Activated CD4-positive, alpha-beta memory T cell treated with anti-CD3 and anti-CD28 coated beads, Interleukin-2, amount 10 ng/mL, durations not matched to agents 7 days and 5 days (primary cell): ENCODE measurements at regions of chr9 and their contacts with region 1.

Region 1: DNA sequence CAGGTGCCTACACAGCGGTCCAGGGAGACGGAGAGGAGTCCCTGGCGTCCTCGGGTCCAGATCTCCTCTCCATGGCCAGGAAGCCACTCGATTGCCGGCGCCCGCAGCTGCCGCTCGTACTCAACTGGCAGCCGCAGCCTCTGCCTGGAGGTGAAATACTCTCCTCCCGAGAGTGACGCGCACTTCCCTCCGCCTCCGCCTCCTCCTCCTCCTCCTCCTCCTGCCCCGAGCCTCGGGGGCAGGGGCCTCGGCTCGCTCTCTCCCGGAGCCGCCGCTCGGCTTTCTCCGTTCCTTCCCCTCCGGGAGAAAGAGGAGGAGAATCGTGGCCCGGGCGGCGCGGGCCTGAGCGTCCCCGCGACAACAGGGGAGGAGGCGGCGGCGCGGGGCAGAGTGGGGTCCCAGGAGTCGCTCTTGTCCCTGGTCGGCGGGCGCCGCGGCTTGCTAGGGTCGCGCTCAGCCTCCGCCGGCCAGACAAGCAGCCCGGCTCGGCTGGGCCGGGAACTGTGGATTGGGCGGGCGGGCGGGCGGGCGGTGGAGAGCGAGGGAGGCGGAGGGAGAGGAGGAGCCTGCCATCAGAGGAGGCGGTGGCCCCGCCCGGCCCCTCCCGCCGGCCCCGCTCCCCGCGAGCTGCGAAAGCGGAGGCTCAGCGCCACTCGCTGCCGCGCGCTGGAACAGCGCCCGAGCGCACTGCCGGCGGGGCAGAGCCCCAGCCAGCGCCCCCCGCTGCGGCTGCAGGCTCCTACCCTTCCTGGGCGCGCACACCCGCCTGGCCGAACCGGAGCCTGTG is at the start of gene CEMIP2:
- DNase-seq: peak; percentile 90
- H3K4me3 Mint-ChIP-seq: peak within 1 kb of the TSS; percentile 84
- H3K27ac Mint-ChIP-seq: peak within 1 kb of the TSS; percentile 83
- H3K4me1 Mint-ChIP-seq: peaks cover 33% of the 10 kb centered on the region
- H3K27me3 Mint-ChIP-seq: no peaks in the 10 kb centered on the region
- total RNA-seq, gene CEMIP2: 137 to 140 TPM

Region 2: DNA sequence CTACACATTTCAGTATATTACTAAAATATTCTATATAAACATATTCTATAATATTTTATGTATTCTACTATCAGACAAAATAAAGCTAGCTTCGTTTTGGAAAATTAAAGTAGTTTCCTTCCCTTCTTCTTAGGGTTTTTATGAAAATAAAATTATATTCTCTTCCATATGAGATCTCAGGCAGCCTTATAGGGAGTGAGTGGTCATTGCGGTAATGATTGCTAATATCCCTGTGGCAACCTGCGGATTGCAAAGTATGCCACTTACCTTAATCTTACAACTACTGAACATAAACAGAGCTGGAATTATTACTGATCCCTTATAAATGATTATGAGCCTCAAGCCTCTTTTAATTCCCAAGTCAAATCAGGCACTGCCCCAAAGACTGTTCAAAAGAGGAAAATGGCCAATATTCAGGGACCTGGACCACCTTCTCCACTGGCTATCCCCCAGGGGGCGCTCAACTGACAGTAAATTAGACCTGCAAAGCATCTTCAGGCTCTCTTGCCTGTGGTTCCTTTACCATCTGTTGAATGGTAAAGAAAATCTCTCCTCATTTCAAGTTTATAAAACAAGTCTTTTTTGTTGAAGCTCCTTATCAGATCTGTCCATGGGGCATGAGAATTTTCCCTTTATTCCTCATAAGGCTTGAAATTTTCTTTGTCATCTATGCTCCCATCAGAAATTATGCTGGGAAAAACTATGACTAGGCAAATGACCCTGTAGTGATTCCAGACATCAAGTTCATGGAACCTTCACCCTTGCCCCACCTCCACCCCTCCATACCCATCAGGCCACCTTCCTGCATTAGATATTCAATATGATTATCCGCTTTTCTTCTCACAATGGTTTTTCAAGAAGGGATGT is 164.2 kb before region 1 on chr9:
- CTCF ChIA-PET with region 1: interaction called, 56 read pairs
- POLR2A ChIA-PET with region 1: interaction called, 4 read pairs
- DNase-seq: peak; percentile 85
- H3K4me3 Mint-ChIP-seq: no peak overlapping the region
- H3K27ac Mint-ChIP-seq: no peak overlapping the region
- H3K4me1 Mint-ChIP-seq: no peaks in the 10 kb centered on the region
- H3K27me3 Mint-ChIP-seq: peaks cover 7% of the 10 kb centered on the region

Region 3: GRCh38 chr9:71683598-71684235 is 84.9 kb before region 1 on chr9:
- CTCF ChIA-PET with region 1: interaction called, 13 read pairs
- POLR2A ChIA-PET with region 1: interaction called, 8 read pairs
- DNase-seq: no peak
- H3K4me3 Mint-ChIP-seq: peak overlapping the region; percentile 53
- H3K27ac Mint-ChIP-seq: peak overlapping the region; percentile 80
- H3K4me1 Mint-ChIP-seq: peaks cover 64% of the 10 kb centered on the region
- H3K27me3 Mint-ChIP-seq: no peaks in the 10 kb centered on the region

Region 4: DNA sequence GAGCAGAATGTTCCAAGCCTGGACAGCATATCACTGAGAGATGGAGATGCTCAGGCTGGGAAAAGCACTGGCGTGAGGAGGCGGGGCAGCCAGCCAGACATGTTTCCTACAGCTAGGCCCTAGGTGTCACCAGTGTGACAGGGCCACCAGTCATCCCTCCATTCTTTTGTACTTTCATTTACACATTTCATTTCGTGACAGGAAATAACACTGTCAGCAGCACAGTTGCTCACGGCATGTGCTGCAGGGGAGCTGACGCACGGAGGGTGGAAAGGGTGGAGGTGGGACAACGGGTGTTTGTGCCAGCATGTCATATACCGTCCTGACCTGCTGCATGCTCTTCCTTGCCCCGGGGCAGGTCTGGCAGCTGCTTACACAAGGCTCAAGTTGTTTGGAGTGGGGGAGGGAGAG is 14.5 kb after region 1 on chr9:
- CTCF ChIA-PET with region 1: interaction called, 65 read pairs
- POLR2A ChIA-PET with region 1: interaction called, 182 read pairs
- DNase-seq: peak; percentile 90
- H3K4me3 Mint-ChIP-seq: peak overlapping the region; percentile 59
- H3K27ac Mint-ChIP-seq: peak overlapping the region; percentile 98
- H3K4me1 Mint-ChIP-seq: peaks cover 46% of the 10 kb centered on the region
- H3K27me3 Mint-ChIP-seq: no peaks in the 10 kb centered on the region

Region 5: DNA sequence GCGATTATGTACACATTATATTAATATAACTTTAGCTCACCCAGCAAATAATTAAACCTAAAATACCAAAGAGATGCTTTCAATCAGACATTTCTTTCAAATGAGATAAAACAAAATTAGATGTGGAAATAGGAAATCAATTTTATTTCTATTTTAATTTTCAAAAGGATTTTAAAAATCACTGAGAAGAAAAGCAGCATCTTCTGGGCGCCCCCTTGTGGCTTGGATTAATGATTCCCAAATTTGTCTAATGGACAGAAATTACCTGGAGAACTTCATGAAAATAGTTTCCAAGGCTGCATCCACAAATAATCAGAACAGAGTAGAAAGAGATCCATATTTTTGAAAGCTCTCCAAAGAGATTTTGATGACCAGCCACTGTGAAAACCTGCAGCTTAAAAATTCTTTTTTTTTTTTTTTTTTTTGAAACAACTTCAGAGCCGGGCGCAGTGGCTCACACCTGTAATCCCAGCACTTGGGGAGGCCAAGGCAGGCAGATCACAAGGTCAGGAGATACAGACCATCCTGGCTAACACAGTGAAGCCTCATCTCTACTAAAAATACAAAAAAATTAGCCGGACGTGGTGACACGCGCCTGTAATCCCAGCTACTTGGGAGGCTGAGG is 50.6 kb after region 1 on chr9:
- CTCF ChIA-PET with region 1: interaction called, 13 read pairs
- POLR2A ChIA-PET with region 1: interaction called, 4 read pairs
- DNase-seq: peak; percentile 36
- H3K4me3 Mint-ChIP-seq: no peak overlapping the region
- H3K27ac Mint-ChIP-seq: no peak overlapping the region
- H3K4me1 Mint-ChIP-seq: peaks cover 19% of the 10 kb centered on the region
- H3K27me3 Mint-ChIP-seq: no peaks in the 10 kb centered on the region

Region 6: GRCh38 chr9:71847892-71848291 is 79.3 kb after region 1 on chr9:
- CTCF ChIA-PET with region 1: no interaction called
- POLR2A ChIA-PET with region 1: no interaction called
- DNase-seq: no peak
- H3K4me3 Mint-ChIP-seq: no peak overlapping the region
- H3K27ac Mint-ChIP-seq: no peak overlapping the region
- H3K4me1 Mint-ChIP-seq: no peaks in the 10 kb centered on the region
- H3K27me3 Mint-ChIP-seq: no peaks in the 10 kb centered on the region